Activated CD4-positive, alpha-beta T cell treated with anti-CD3 and anti-CD28 coated beads for 36 hours (primary cell): ENCODE measurements at regions of chr5 and their contacts with region 1.

Region 1: GRCh38 chr5:141753971-141754713 is 72.1 kb upstream of the ARAP3 start:
- DNase-seq: peak; percentile 49
- ATAC-seq: no peak
- H3K4me3 Mint-ChIP-seq: no peak overlapping the region
- H3K27ac Mint-ChIP-seq: no peak overlapping the region
- H3K4me1 Mint-ChIP-seq: no peaks in the 10 kb centered on the region
- H3K27me3 Mint-ChIP-seq: peaks cover 57% of the 10 kb centered on the region

Region 2: GRCh38 chr5:141734501-141735230 is 19.5 kb before region 1 on chr5:
- CTCF ChIA-PET with region 1: no interaction called
- POLR2A ChIA-PET with region 1: no interaction called
- intact Hi-C with region 1: loop called in 1 of 2 experiments (anchors 2 kb)
- DNase-seq: peak; percentile 64
- ATAC-seq: peak; percentile 44
- H3K4me3 Mint-ChIP-seq: no peak overlapping the region
- H3K27ac Mint-ChIP-seq: no peak overlapping the region
- H3K4me1 Mint-ChIP-seq: no peaks in the 10 kb centered on the region
- H3K27me3 Mint-ChIP-seq: peaks cover 15% of the 10 kb centered on the region

Region 3: DNA sequence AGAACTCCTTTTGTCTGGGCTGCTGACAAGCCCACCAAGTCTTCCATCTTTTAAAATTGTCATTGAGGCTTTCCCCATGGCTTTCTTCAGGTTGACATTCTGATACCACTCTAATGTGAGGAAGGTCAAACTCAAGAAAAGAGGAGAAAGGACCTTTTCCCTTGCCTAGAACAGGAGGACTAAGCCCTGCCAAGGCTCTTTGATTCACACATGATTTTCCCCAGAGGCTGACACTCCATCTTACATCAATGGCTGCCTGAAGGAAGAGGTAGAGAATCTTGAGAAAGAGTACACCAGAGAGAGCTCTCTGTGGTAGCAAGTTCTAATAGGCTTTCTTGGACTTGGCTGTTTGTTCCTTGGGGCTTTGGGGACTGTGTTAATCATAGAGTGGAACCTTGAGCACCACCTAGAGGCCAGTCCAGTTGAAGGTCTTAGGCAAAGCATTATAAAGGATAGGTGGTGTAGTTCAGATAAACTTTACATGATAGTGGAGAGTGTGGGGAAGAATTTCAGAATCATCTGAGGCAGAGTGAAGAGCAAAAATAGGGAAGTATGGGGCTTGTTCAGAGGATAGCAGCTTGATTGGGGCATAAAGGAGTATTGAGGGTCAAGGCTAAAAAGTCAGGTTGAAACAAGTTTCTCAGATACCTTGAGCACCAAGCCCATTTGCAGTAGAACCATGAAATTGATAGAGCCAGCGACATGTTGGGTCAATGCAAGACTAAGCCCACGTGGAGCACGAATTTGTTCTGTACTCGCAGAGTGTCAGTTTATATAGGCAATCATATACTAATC is 391.2 kb after region 1 on chr5:
- CTCF ChIA-PET with region 1: no interaction called
- POLR2A ChIA-PET with region 1: no interaction called
- intact Hi-C with region 1: no loop called
- DNase-seq: peak; percentile 78
- ATAC-seq: peak; percentile 93
- H3K4me3 Mint-ChIP-seq: no peak overlapping the region
- H3K27ac Mint-ChIP-seq: no peak overlapping the region
- H3K4me1 Mint-ChIP-seq: peaks cover 7% of the 10 kb centered on the region
- H3K27me3 Mint-ChIP-seq: no peaks in the 10 kb centered on the region